Endothelial cell of umbilical vein (primary cell): ENCODE measurements at regions of chr15 and their contacts with region 1.

Region 1: GRCh38 chr15:64651573-64652260 is 123.7 kb downstream of the RBPMS2 start:
- DNase-seq: no peak
- H3K4me3 ChIP-seq: no peak overlapping the region
- H3K27ac ChIP-seq: no peak overlapping the region
- H3K4me1 ChIP-seq: no peaks in the 10 kb centered on the region
- H3K27me3 ChIP-seq: no peaks in the 10 kb centered on the region
- CTCF ChIP-seq: no peak
- POLR2A ChIP-seq: no peak

Region 2: GRCh38 chr15:64046347-64047153 is 605.2 kb before region 1 on chr15 and contains the start of gene DAPK2:
- CTCF ChIA-PET with region 1: no interaction called
- POLR2A ChIA-PET with region 1: interaction called, 12 read pairs
- dilution Hi-C with region 1: no loop called
- intact Hi-C with region 1: no loop called
- DNase-seq: peak; percentile 57
- H3K4me3 ChIP-seq: peak within 1 kb of the TSS in 2 of 3 experiments; percentile 5 to 45
- H3K27ac ChIP-seq: no peak within 1 kb of the TSS
- H3K4me1 ChIP-seq: peaks cover 6% of the 10 kb centered on the region
- H3K27me3 ChIP-seq: peaks cover 13 to 19% of the 10 kb centered on the region in 2 experiments
- CTCF ChIP-seq: peak; percentile 79 to 82
- POLR2A ChIP-seq: no peak
- total RNA-seq, gene DAPK2: 6.7 and 7.5 TPM in 2 replicates

Region 3: GRCh38 chr15:64430000-64430735 is 221.5 kb before region 1 on chr15:
- CTCF ChIA-PET with region 1: interaction called, 92 read pairs
- POLR2A ChIA-PET with region 1: no interaction called
- dilution Hi-C with region 1: no loop called
- intact Hi-C with region 1: loop called (anchors 2 kb)
- DNase-seq: peak; percentile 77
- H3K4me3 ChIP-seq: no peak overlapping the region
- H3K27ac ChIP-seq: no peak overlapping the region
- H3K4me1 ChIP-seq: peaks cover 2% of the 10 kb centered on the region
- H3K27me3 ChIP-seq: no peaks in the 10 kb centered on the region
- CTCF ChIP-seq: no peak
- POLR2A ChIP-seq: no peak

Region 4: DNA sequence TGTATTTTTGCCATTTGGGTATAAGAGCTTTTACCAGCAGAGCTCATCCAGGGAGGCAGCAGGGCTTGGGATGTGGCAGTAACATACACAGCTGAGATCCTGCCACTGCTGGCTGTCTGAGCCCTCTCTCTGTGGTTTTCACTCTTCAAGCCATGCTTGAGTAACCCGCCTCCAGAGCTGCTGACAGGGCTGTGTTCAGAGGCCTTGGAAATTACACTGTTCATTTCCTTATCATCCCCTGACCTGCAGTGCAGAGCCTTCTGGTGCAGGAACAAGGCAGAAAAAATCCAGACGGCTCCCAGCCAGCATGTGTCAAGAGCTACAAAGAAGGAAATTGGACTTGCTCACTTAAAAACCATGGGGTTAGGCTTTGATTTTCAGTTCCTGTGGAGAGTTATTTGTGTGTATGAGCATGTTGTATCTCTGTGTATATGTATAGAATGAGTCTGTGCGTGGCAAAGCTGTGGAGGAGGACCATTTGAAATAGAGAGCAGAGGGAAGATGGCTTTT is 144.4 kb before region 1 on chr15:
- CTCF ChIA-PET with region 1: interaction called, 12 read pairs
- POLR2A ChIA-PET with region 1: no interaction called
- dilution Hi-C with region 1: no loop called
- intact Hi-C with region 1: no loop called
- DNase-seq: peak; percentile 82
- H3K4me3 ChIP-seq: no peak overlapping the region
- H3K27ac ChIP-seq: no peak overlapping the region
- H3K4me1 ChIP-seq: peaks cover 32% of the 10 kb centered on the region
- H3K27me3 ChIP-seq: no peaks in the 10 kb centered on the region
- CTCF ChIP-seq: no peak
- POLR2A ChIP-seq: no peak

Region 5: GRCh38 chr15:64596701-64597476 is 54.8 kb before region 1 on chr15:
- CTCF ChIA-PET with region 1: interaction called, 10 read pairs
- POLR2A ChIA-PET with region 1: no interaction called
- dilution Hi-C with region 1: no loop called
- intact Hi-C with region 1: no loop called
- DNase-seq: peak; percentile 62
- H3K4me3 ChIP-seq: no peak overlapping the region
- H3K27ac ChIP-seq: no peak overlapping the region
- H3K4me1 ChIP-seq: peaks cover 12% of the 10 kb centered on the region
- H3K27me3 ChIP-seq: no peaks in the 10 kb centered on the region
- CTCF ChIP-seq: no peak
- POLR2A ChIP-seq: no peak